ENCODE measurements at regions of chr4 and their contacts with region 1.

Region 1: DNA sequence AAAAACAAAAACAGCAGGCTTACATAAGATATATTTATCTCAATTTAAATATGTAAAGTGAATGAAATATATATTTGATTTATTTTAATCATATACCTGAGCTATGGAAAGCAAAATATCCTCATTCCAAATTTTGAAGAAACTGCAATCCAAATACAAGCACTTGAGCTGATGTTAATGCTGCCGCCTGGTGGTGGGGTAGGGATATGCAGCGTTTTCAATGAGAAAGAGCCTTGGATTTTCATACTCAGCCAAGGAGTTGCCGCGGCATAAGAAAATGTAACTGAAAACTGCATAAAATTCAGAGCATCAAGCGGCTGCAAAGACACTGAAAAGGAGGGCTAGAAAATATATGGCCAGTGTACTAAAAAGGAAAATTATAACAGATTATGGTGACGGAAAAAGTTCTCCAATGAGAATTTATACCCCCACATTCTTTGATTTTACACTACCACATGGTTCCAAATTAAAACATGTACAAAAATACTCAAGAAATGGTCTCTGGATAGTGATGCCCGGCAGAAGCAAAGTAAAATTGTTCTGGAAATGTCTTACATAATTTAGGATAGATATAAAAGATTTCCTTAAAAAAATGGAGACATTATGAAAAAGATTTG is 660.3 kb upstream of the PITX2 start:
- DNase-seq: peak; percentile 34
- CTCF ChIP-seq: peak; percentile 82

Region 2: GRCh38 chr4:111268769-111269414 is 14.3 kb before region 1 on chr4:
- CTCF ChIA-PET with region 1: interaction called, 13 read pairs
- POLR2A ChIA-PET with region 1: no interaction called
- DNase-seq: peak; percentile 15
- CTCF ChIP-seq: no peak

Measured in GM10248 (cell line).